HAP-1 (cell line): ENCODE measurements at regions of chr12 and their contacts with region 1.

Region 1: GRCh38 chr12:53205747-53206419 is 1.2 kb downstream of the ITGB7 start:
- DNase-seq: no peak
- H3K4me3 ChIP-seq: no peak overlapping the region
- H3K4me1 ChIP-seq: no peaks in the 10 kb centered on the region
- H3K27me3 ChIP-seq: no peaks in the 10 kb centered on the region

Region 2: DNA sequence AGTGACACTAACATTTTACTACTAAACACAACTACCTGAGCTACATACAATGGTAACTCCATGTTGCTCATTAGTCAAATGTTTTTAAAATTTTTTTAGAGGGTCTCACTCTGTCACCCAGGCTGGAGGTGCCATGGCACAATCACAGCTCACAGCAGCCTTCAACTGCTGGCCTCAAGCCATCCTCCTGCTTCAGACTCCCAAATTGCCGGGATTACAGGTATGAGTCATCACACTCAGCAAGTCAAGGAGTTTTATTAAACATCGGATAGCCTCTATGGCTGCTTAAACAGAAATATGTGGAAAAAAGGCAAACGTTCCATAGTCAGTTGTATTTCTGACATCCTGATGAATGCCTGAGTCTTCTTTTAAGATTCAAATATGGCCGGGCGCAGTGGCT is 312.5 kb after region 1 on chr12:
- in situ Hi-C with region 1: loop called (anchors 10 kb)
- DNase-seq: no peak
- H3K4me3 ChIP-seq: no peak overlapping the region
- H3K4me1 ChIP-seq: no peaks in the 10 kb centered on the region
- H3K27me3 ChIP-seq: no peaks in the 10 kb centered on the region